OCI-LY7 (cell line): ENCODE measurements at regions of chr4 and their contacts with region 1.

Region 1: DNA sequence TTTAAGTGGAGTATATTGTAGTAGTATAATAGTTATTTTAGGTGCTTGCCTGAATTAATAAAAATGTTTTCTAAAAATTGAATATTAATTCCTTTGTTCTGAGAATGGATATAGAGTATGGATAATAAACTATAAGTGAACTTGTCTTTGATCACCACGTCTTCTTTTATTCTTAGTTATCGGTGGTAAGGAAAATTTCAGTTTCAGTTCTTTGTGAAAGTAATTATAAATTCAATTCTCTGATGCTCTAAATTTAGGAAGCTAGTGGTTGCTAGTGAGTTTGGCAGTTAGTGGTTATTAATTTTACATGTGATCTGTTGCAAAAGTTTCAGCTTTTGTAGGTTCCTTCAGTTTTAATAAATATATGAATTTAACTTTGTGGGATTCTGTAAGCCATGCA is 30.8 kb downstream of the MRPL1 start:
- DNase-seq: peak; percentile 42
- H3K4me3 ChIP-seq: peak overlapping the region; percentile 47
- H3K27ac ChIP-seq: peak overlapping the region; percentile 84
- H3K4me1 ChIP-seq: peaks cover 55% of the 10 kb centered on the region
- CTCF ChIP-seq: no peak

Region 2: DNA sequence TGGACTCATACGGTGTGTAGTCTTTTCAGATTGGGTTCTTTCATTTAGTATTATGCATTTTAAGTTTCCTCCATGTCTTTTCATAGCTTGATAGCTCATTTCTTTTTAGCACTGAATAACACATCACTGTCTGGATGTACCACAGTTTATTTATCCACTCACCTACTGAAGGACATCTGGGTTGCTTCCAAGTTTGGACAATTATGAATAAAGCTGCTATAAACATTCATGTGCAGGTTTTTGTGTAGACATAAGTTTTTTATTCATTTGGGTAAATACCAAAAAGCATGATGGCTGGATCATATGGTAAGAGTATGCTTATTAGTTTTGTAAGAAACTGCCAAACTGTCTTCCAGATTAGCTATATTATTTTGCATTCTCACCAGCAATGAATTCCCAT is 103.3 kb before region 1 on chr4:
- CTCF ChIA-PET with region 1: no interaction called
- POLR2A ChIA-PET with region 1: interaction called, 10 read pairs
- intact Hi-C with region 1: no loop called
- DNase-seq: no peak
- H3K4me3 ChIP-seq: no peak overlapping the region
- H3K27ac ChIP-seq: no peak overlapping the region
- H3K4me1 ChIP-seq: no peaks in the 10 kb centered on the region
- CTCF ChIP-seq: no peak

Region 3: DNA sequence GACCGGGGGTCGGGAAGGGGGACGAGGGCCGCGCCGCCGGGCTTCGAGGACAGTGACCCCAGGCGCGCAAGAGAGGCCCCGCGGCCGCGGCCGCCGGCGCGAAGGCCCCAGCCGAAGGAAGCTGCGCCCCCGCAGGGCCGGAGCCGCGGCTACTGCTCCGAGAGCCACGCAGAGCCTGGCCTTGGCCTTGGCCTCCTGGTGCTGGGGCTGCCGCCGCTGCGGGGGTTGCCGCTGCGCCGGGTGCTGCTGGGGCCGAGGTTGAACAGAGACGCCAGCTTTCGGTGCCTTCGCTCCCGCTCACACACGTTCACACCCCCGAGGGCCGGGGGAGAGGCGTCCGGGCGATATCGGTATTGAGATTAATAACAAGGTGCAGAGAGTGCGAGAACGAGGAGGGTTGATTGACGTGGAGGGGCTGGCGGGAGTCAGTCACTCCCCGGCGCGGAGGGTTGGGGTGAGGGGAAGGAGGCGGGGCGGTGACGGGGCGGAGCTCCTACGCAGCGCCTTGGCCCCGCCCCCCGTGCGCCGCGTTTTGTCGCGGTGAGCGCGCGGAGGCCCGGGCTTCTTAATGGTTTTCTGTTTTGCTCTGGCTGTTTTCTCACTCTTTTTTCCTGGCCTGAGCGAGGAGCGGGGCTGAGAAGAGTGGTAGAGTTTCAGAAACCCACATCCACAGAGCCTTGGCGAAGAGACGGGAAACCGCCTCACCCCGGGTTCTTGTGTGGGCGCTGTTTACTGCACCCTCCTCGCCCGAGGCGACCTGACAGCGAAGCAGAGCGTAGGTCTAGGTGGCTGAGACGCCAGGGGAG is 73.4 kb before region 1 on chr4:
- CTCF ChIA-PET with region 1: no interaction called
- POLR2A ChIA-PET with region 1: interaction called, 11 read pairs
- intact Hi-C with region 1: loop called (anchors 2 kb)
- DNase-seq: peak; percentile 95
- H3K4me3 ChIP-seq: peak overlapping the region; percentile 95
- H3K27ac ChIP-seq: peak overlapping the region; percentile 94
- H3K4me1 ChIP-seq: peaks cover 65% of the 10 kb centered on the region
- CTCF ChIP-seq: no peak; the same call in 1 of the 2 replicates

Region 4: DNA sequence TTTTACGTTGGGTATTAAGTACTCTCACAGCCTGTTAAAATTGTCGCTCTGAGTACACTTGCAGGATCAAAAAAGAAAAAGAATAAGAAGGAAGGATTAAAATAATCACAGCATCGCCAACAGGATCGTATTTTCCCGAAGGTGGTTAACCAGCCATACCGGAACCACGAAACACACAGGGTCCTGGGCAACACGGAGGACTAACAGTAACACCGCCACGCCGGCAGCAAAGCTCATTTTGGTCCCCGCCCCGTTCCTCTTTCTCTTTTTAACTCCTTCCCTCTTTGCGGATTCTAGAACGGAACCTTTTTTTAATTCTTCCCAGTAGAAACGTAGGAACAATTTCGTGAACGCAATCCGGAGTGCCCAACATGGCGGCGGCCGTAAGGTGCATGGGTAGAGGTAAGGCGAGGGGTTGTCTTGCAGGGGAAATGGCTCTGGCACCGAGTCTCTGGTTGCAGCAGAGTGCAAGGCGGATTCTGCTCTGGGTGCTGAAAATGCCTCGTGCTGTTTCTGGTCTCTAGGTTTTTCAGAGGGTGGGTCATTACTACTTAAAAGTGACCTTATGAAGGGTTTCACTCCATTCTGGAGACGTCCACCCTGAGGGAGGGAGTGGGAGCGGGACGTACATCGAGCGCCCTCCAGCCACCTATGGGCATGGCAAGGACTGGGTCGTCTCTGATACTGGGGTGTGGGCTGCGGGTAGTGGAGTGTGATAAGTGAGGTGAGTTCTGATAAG is 30.8 kb before region 1 on chr4 and contains the start of gene MRPL1:
- CTCF ChIA-PET with region 1: no interaction called
- POLR2A ChIA-PET with region 1: interaction called, 7 read pairs
- intact Hi-C with region 1: loop called (anchors 2 kb)
- DNase-seq: peak; percentile 96
- H3K4me3 ChIP-seq: peak within 1 kb of the TSS; percentile 73
- H3K27ac ChIP-seq: peak within 1 kb of the TSS; percentile 94
- H3K4me1 ChIP-seq: peaks cover 27% of the 10 kb centered on the region
- CTCF ChIP-seq: peak; percentile 62
- total RNA-seq, gene MRPL1: 16.6 and 22.6 TPM in 2 replicates

Region 5: DNA sequence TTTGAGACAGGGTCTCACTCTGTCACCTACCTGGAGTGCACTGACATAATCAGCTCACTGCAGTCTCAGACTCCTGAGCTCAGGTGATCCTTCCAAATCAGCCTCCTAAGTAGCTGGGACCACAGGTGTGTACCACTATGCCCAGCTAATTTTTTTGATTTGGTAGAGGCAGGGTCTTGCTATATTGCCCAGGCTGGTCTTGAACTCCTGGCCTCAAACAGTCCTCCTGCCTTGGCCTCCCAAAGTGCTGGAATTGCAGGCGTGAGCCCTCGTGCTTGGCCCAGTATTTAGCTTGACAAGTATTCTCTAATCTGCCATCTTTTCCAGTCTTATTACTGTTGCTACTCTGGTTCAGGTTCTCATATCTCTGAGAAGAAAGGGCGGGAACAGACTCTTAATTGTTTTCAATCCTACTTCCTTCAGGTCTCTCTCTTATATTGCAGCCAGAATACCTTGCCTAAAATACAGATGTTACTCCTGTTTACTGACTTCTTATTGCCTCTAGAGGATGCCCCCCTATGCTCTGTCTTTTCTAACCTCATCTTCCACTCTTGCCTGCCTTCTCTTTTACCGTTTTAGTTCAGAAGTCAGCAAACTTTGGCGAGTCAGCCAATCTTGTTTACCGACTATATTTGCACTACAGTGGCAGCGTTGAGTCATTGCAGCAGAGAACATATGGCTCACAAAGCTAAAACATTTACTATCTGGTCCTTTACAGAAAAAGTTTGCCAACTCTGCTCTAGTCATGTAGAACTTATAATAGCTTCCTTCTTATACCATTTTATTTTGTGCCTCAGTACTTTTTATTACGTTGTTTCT is 11.8 kb before region 1 on chr4:
- CTCF ChIA-PET with region 1: no interaction called
- POLR2A ChIA-PET with region 1: interaction called, 10 read pairs
- intact Hi-C with region 1: no loop called
- DNase-seq: no peak
- H3K4me3 ChIP-seq: no peak overlapping the region
- H3K27ac ChIP-seq: no peak overlapping the region
- H3K4me1 ChIP-seq: no peaks in the 10 kb centered on the region
- CTCF ChIP-seq: no peak

Region 6: GRCh38 chr4:77911091-77911490 is 17.6 kb after region 1 on chr4:
- CTCF ChIA-PET with region 1: no interaction called
- POLR2A ChIA-PET with region 1: interaction called, 33 read pairs
- intact Hi-C with region 1: no loop called
- DNase-seq: no peak
- H3K4me3 ChIP-seq: no peak overlapping the region
- H3K27ac ChIP-seq: no peak overlapping the region
- H3K4me1 ChIP-seq: peaks cover 13% of the 10 kb centered on the region
- CTCF ChIP-seq: no peak

Region 7: GRCh38 chr4:77917075-77917474 is 23.6 kb after region 1 on chr4:
- CTCF ChIA-PET with region 1: no interaction called
- POLR2A ChIA-PET with region 1: interaction called, 33 read pairs
- intact Hi-C with region 1: no loop called
- DNase-seq: no peak
- H3K4me3 ChIP-seq: peak overlapping the region; percentile 42
- H3K27ac ChIP-seq: peak overlapping the region; percentile 62
- H3K4me1 ChIP-seq: peaks cover 59% of the 10 kb centered on the region
- CTCF ChIP-seq: no peak

Region 8: GRCh38 chr4:78014889-78015885 is 121.7 kb after region 1 on chr4:
- CTCF ChIA-PET with region 1: no interaction called
- POLR2A ChIA-PET with region 1: no interaction called
- intact Hi-C with region 1: no loop called
- DNase-seq: no peak
- H3K4me3 ChIP-seq: no peak overlapping the region
- H3K27ac ChIP-seq: no peak overlapping the region
- H3K4me1 ChIP-seq: no peaks in the 10 kb centered on the region
- CTCF ChIP-seq: no peak